GM12878 (cell line): ENCODE measurements at regions of chr11 and their contacts with region 1.

Region 1: DNA sequence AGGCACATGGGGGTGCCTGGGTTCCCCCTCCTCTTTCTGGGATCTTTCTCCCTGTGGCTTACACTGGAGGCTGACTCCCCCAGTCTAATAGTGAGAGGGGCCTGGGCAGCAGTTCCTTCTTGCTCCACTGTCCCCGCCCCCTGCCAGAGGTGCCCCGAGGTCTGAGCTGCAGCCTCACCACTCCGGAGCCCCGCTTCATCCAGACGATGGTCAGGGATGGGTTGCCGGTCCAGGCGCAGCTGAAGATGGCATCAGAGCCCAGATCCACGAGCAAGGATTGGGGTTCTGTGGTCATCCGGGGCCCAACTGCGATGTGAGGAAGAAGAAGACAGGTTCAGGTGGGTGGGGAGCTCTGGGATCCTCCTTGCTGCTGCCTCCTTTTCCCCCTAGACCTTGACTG is 91.1 kb downstream of the ST3GAL4 start:
- DNase-seq: no peak
- ATAC-seq: no peak
- H3K4me3 ChIP-seq: no peak overlapping the region
- H3K27ac ChIP-seq: no peak overlapping the region
- H3K4me1 ChIP-seq: no peaks in the 10 kb centered on the region
- H3K27me3 ChIP-seq: no peaks in the 10 kb centered on the region; a peak in 1 of 4 replicates
- CTCF ChIP-seq: no peak
- EP300 ChIP-seq: no peak
- POLR2A ChIP-seq: no peak
- RAD21 ChIP-seq: no peak

Region 2: DNA sequence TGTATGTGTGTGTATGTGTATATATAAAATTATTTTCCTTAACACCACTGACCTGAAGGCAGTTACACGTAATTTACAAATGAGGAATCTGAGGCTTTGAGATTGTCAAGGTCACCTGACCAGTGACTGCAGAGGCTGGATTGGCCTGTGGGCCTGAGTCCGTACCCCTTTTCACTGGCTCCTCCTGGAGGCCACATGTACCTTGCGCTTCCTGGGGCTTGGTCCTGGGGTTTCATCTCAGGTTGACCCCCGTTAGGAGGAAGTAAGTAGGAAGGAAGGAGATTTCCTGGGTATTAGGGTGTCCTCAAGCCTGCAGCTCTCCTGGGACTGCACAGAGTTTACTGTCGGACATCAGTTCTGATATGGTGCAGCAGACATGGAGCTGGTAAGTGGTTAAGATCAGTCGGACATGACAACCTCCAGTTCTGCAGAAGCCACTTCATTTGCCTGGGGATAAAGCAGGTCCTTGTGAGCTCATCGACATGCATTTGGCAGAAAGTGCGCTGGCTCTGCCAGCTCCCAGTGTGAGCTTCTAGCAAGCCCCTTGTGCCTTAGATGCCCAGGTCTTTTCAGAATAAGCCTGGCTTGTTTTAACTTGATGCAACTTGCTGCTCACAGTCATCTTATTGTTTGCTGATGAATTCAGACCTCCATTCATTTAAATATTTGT is 54.5 kb before region 1 on chr11:
- CTCF ChIA-PET with region 1: no interaction called
- POLR2A ChIA-PET with region 1: no interaction called
- RAD21 ChIA-PET with region 1: no interaction called
- SMC1A ChIA-PET with region 1: no interaction called
- in situ Hi-C with region 1: no loop called
- intact Hi-C with region 1: no loop called
- DNase-seq: peak; percentile 35
- ATAC-seq: peak; percentile 75
- H3K4me3 ChIP-seq: no peak overlapping the region
- H3K27ac ChIP-seq: no peak overlapping the region
- H3K4me1 ChIP-seq: peaks cover 9% of the 10 kb centered on the region
- H3K27me3 ChIP-seq: no peaks in the 10 kb centered on the region
- CTCF ChIP-seq: peak in 2 of 3 experiments; percentile 22 to 29; a peak in 4 of 6 replicates
- EP300 ChIP-seq: no peak
- POLR2A ChIP-seq: no peak
- RAD21 ChIP-seq: peak; percentile 29; the same call in 1 of the 2 replicates

Region 3: GRCh38 chr11:126594921-126595367 is 148.4 kb after region 1 on chr11:
- CTCF ChIA-PET with region 1: no interaction called
- POLR2A ChIA-PET with region 1: no interaction called
- RAD21 ChIA-PET with region 1: no interaction called
- SMC1A ChIA-PET with region 1: no interaction called
- in situ Hi-C with region 1: no loop called
- intact Hi-C with region 1: no loop called
- DNase-seq: no peak
- ATAC-seq: no peak
- H3K4me3 ChIP-seq: no peak overlapping the region
- H3K27ac ChIP-seq: no peak overlapping the region
- H3K4me1 ChIP-seq: no peaks in the 10 kb centered on the region
- H3K27me3 ChIP-seq: peaks cover 2 to 7% of the 10 kb centered on the region in 2 experiments; a peak in 3 of 4 replicates
- CTCF ChIP-seq: no peak
- EP300 ChIP-seq: no peak
- POLR2A ChIP-seq: no peak
- RAD21 ChIP-seq: no peak

Region 4: GRCh38 chr11:127345819-127346459 is 899.4 kb after region 1 on chr11:
- CTCF ChIA-PET with region 1: interaction called, 12 read pairs
- POLR2A ChIA-PET with region 1: no interaction called
- RAD21 ChIA-PET with region 1: no interaction called
- SMC1A ChIA-PET with region 1: interaction called, 8 read pairs
- in situ Hi-C with region 1: loop called (anchors 5 kb)
- intact Hi-C with region 1: loop called (anchors 1 kb)
- DNase-seq: no peak
- ATAC-seq: peak; percentile 52
- H3K4me3 ChIP-seq: no peak overlapping the region
- H3K27ac ChIP-seq: no peak overlapping the region
- H3K4me1 ChIP-seq: no peaks in the 10 kb centered on the region
- H3K27me3 ChIP-seq: no peaks in the 10 kb centered on the region; a peak in 1 of 4 replicates
- CTCF ChIP-seq: peak; percentile 67 to 76 (median 74)
- EP300 ChIP-seq: no peak
- POLR2A ChIP-seq: no peak
- RAD21 ChIP-seq: peak; percentile 57